Right lobe of liver (tissue), 6 donors: ENCODE measurements at regions of chr12 and their contacts with region 1.

Region 1: GRCh38 chr12:53159195-53159839 is 21.2 kb upstream of the ZNF740 start:
- DNase-seq: peak; percentile 81 to 89 (median 87)
- ATAC-seq: peak; percentile 82 to 94 (median 92)
- H3K4me3 ChIP-seq: no peak overlapping the region
- H3K27ac ChIP-seq: peak overlapping the region in 1 of 3 donors; percentile 60
- H3K4me1 ChIP-seq: peaks cover 0 to 56% (median 23%) of the 10 kb centered on the region in 4 donors
- H3K27me3 ChIP-seq: no peaks in the 10 kb centered on the region
- CTCF ChIP-seq: peak; percentile 94 to 99 (median 96)
- POLR2A ChIP-seq: no peak

Region 2: DNA sequence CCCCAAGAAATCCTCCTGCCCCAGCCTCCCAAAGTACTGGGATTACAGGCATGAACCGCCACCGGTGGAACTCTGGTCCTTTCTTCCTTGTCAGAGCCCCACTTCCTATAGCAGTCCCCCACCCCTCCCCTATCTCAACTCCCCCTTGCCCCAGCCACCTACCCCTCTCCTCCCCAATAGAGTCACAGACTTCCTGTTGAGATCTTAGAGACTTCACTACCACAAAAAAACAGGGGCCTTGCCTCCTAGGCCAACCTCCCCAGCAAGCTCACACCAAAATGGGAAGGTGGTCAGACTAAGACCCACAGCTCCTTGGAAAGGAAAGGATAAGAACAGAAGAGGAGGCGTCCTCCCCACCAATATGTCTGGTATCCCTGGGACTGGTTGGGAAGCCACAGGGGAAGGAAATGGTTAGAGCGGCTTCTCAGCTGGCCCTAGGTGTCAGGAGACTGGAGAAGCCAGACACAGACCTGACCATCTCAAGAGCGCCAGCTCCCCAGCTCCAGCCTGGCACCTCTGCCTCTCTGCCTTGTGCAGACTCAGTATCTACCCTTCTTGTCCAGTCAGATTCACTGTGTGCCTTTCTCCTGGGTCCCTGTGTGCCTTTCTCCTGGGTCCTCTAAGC is 39.3 kb after region 1 on chr12:
- intact Hi-C with region 1: loop called (anchors 5 kb)
- DNase-seq: no peak
- ATAC-seq: no peak
- H3K4me3 ChIP-seq: no peak overlapping the region
- H3K27ac ChIP-seq: no peak overlapping the region
- H3K4me1 ChIP-seq: peaks cover 0 to 27% (median 4%) of the 10 kb centered on the region in 4 donors
- H3K27me3 ChIP-seq: no peaks in the 10 kb centered on the region
- CTCF ChIP-seq: no peak
- POLR2A ChIP-seq: no peak

Region 3: DNA sequence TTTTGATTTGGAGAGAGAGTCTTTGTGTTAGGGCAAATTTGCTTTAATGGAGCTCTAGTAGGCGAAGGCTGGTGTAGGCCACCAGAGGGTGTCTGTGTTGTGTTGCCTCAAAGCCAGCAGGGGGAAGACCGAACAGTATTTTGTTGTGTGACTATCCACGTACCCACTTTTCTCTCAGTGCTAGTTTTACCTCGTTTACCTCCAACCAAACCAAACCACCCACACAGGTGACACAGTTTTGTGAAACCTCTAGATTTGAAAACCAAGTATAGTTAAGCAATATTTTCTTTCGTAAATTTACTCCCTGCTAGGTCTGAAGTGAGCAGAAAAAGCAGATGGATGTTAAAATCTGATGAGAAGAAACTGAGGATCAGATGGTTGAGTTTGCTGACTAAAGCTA is 384.2 kb after region 1 on chr12:
- intact Hi-C with region 1: no loop called
- DNase-seq: peak in 2 of 3 donors; percentile 34 to 58
- ATAC-seq: peak; percentile 81 to 93 (median 90)
- H3K4me3 ChIP-seq: no peak overlapping the region
- H3K27ac ChIP-seq: peak overlapping the region in 2 of 3 donors; percentile 9 to 49
- H3K4me1 ChIP-seq: peaks cover 0 to 34% (median 11%) of the 10 kb centered on the region in 4 donors
- H3K27me3 ChIP-seq: no peaks in the 10 kb centered on the region
- CTCF ChIP-seq: peak; percentile 77 to 92 (median 82)
- POLR2A ChIP-seq: no peak